Panc1 (cell line): ENCODE measurements at regions of chr6 and their contacts with region 1.

Region 1: GRCh38 chr6:10954590-10955010 is 67.7 kb downstream of the SYCP2L start:
- DNase-seq: peak; percentile 36
- ATAC-seq: peak; percentile 87
- H3K4me3 ChIP-seq: no peak overlapping the region
- H3K27ac ChIP-seq: no peak overlapping the region
- H3K4me1 ChIP-seq: peaks cover 5% of the 10 kb centered on the region
- H3K27me3 ChIP-seq: no peaks in the 10 kb centered on the region
- CTCF ChIP-seq: peak; percentile 87

Region 2: GRCh38 chr6:11043961-11044711 is 89.5 kb after region 1 on chr6 and contains the start of gene ELOVL2:
- CTCF ChIA-PET with region 1: interaction called, 4 read pairs
- POLR2A ChIA-PET with region 1: no interaction called
- in situ Hi-C with region 1: no loop called
- intact Hi-C with region 1: loop called (anchors 5 kb)
- DNase-seq: no peak
- ATAC-seq: peak; percentile 83
- H3K4me3 ChIP-seq: peak within 1 kb of the TSS; percentile 56 to 75
- H3K27ac ChIP-seq: peak within 1 kb of the TSS; percentile 81
- H3K4me1 ChIP-seq: peaks cover 29% of the 10 kb centered on the region
- H3K27me3 ChIP-seq: no peaks in the 10 kb centered on the region
- CTCF ChIP-seq: peak; percentile 100
- total RNA-seq, gene ELOVL2: 27.8 TPM

Region 3: DNA sequence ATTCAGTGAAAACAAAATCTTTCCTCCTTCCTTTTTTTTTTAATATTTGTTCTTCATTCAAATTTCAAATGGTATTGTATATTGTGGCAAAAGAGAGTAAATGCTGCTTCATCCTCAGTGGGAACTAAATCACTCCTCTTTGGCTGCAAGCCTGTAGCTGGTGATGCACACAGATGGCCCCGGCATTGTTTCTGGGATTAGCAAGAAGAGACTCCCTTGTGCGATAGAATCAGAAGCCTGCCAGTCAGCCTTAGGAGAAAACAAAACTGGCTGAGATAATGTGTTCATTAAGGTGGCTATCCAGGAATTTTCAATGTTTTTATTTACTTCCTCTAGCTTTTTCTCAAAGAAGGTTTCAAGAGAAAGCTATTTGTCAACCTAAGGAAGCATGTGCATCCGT is 110.2 kb after region 1 on chr6:
- CTCF ChIA-PET with region 1: interaction called, 16 read pairs
- POLR2A ChIA-PET with region 1: no interaction called
- in situ Hi-C with region 1: no loop called
- intact Hi-C with region 1: loop called (anchors 2 kb)
- DNase-seq: no peak
- ATAC-seq: no peak
- H3K4me3 ChIP-seq: no peak overlapping the region
- H3K27ac ChIP-seq: no peak overlapping the region
- H3K4me1 ChIP-seq: no peaks in the 10 kb centered on the region
- H3K27me3 ChIP-seq: no peaks in the 10 kb centered on the region
- CTCF ChIP-seq: no peak

Region 4: DNA sequence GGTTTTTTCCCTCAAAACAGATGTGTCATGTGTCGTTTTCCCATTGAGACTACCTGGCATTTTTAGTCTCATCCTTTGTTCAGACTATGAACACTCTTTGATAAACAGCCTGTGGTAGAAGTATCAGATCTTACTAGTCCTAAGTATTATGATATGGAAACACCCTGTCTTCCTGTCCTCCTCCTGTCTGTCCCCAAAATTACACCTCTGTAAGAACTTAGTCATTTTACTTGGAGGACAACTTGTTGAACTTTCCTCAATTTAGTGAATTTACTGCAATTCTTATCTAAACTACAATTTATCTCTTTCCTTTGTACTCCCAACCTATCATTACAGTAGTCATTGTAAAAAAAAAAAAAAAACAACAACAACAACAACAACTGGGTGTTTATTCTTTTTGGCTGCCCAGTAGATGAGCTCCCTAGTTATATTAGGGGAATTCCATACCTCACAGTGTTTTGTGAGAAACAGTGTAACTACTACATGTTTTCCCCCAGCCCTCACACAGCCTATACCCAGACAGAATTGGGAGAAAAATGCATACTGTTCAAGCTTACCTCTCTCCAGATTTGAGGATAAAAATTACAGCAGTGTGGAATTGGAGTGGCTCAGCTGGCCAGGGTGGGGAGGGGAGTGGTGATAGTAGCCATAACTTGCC is 175.4 kb after region 1 on chr6:
- CTCF ChIA-PET with region 1: no interaction called
- POLR2A ChIA-PET with region 1: no interaction called
- in situ Hi-C with region 1: no loop called
- intact Hi-C with region 1: loop called (anchors 5 kb)
- DNase-seq: no peak
- ATAC-seq: no peak
- H3K4me3 ChIP-seq: no peak overlapping the region
- H3K27ac ChIP-seq: no peak overlapping the region
- H3K4me1 ChIP-seq: no peaks in the 10 kb centered on the region
- H3K27me3 ChIP-seq: no peaks in the 10 kb centered on the region
- CTCF ChIP-seq: no peak

Region 5: GRCh38 chr6:11496152-11497060 is 541.8 kb after region 1 on chr6:
- CTCF ChIA-PET with region 1: no interaction called
- POLR2A ChIA-PET with region 1: no interaction called
- in situ Hi-C with region 1: no loop called
- intact Hi-C with region 1: loop called (anchors 5 kb)
- DNase-seq: peak; percentile 72
- ATAC-seq: peak; percentile 90
- H3K4me3 ChIP-seq: no peak overlapping the region
- H3K27ac ChIP-seq: no peak overlapping the region
- H3K4me1 ChIP-seq: no peaks in the 10 kb centered on the region
- H3K27me3 ChIP-seq: no peaks in the 10 kb centered on the region; the same call in 1 of the 2 replicates
- CTCF ChIP-seq: peak; percentile 86